H1 (cell line): ENCODE measurements at regions of chr6 and their contacts with region 1.

Region 1: DNA sequence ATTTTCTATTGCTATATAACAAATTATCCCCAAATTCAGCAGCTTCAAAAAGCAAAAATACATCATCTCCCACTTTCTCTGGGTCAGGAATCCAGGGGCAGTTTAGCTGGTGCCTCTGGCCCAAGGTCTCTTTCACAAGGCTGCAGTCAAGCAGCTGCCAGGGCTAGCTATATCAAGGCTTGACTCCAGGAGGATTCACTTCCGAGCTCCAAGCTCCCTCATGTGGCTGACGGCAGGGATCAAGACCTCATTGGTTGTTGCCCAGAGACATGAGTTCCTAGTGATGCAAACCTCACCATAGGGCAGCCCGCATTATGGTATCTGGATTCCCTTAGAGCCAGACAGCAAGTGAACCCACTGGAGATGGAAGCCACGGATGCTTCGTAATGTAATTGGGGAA is 1.3 kb upstream of the VNN1 start:
- DNase-seq: peak; percentile 54 to 58
- H3K4me3 ChIP-seq: no peak overlapping the region
- H3K27ac ChIP-seq: no peak overlapping the region
- H3K4me1 ChIP-seq: no peaks in the 10 kb centered on the region
- H3K27me3 ChIP-seq: no peaks in the 10 kb centered on the region
- CTCF ChIP-seq: peak; percentile 55 to 77 (median 74)
- EP300 ChIP-seq: no peak
- POLR2A ChIP-seq: no peak
- RAD21 ChIP-seq: peak; percentile 90 to 95

Region 2: GRCh38 chr6:132530293-132530974 is 184.8 kb before region 1 on chr6:
- CTCF ChIA-PET with region 1: interaction called, 14 read pairs
- POLR2A ChIA-PET with region 1: no interaction called
- DNase-seq: peak in 1 of 2 experiments; percentile 77
- H3K4me3 ChIP-seq: peak overlapping the region in 1 of 4 experiments; percentile 38; a peak in 1 of 8 replicates
- H3K27ac ChIP-seq: no peak overlapping the region
- H3K4me1 ChIP-seq: peaks cover 0 to 2% (median 0%) of the 10 kb centered on the region in 4 experiments; a peak in 2 of 7 replicates
- H3K27me3 ChIP-seq: no peaks in the 10 kb centered on the region
- CTCF ChIP-seq: peak in 2 of 3 experiments; percentile 64 to 71; a peak in 3 of 4 replicates
- EP300 ChIP-seq: no peak
- POLR2A ChIP-seq: no peak
- RAD21 ChIP-seq: peak; percentile 85

Region 3: DNA sequence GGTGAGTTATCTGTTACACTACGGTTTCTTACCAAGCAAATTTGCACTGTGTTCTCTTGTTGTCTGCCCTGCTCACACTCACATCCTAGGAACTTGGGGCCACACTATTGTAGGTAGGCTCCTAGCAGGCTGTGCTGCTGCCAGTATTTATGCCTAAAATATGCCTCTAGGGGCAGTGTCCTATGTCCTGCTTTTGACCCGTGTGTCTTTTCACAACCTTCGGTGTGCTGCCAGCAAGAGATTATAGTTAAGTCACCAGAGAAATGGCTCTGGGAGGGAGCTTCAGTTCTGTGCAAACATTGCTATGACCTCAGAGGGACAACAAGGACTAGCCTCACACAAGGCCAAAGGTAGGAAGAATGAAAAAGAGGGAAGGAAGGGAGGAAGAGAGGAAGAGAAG is 116.7 kb before region 1 on chr6:
- CTCF ChIA-PET with region 1: interaction called, 13 read pairs
- POLR2A ChIA-PET with region 1: no interaction called
- DNase-seq: no peak
- H3K4me3 ChIP-seq: no peak overlapping the region
- H3K27ac ChIP-seq: no peak overlapping the region
- H3K4me1 ChIP-seq: no peaks in the 10 kb centered on the region
- H3K27me3 ChIP-seq: no peaks in the 10 kb centered on the region
- CTCF ChIP-seq: peak; percentile 21 to 72 (median 49)
- EP300 ChIP-seq: no peak
- POLR2A ChIP-seq: no peak
- RAD21 ChIP-seq: peak; percentile 32 to 35

Region 4: GRCh38 chr6:132703936-132704335 is 11.3 kb before region 1 on chr6:
- CTCF ChIA-PET with region 1: interaction called, 15 read pairs
- POLR2A ChIA-PET with region 1: no interaction called
- DNase-seq: no peak
- H3K4me3 ChIP-seq: no peak overlapping the region
- H3K27ac ChIP-seq: no peak overlapping the region
- H3K4me1 ChIP-seq: no peaks in the 10 kb centered on the region
- H3K27me3 ChIP-seq: no peaks in the 10 kb centered on the region
- CTCF ChIP-seq: no peak
- EP300 ChIP-seq: no peak
- POLR2A ChIP-seq: no peak
- RAD21 ChIP-seq: no peak

Region 5: DNA sequence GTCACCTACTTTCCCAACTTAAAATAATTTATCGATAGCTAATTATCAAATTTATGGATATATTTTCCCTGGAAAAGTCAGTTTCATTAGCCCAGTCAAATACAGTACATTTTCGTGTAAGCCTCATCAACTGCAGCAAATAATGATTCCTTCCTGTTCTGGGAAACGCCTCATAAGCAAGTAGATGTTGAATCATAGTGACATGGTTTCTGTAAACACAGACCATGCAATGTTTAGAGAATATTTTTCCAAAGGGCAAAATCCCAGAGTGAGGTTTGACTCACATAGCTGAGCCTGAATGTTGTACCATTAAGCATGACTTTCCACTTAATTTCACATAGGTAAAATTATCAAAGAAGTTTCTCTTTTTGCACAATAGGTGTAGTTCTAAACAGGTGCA is 15.4 kb after region 1 on chr6:
- CTCF ChIA-PET with region 1: interaction called, 38 read pairs
- POLR2A ChIA-PET with region 1: no interaction called
- DNase-seq: no peak
- H3K4me3 ChIP-seq: no peak overlapping the region
- H3K27ac ChIP-seq: no peak overlapping the region
- H3K4me1 ChIP-seq: no peaks in the 10 kb centered on the region
- H3K27me3 ChIP-seq: no peaks in the 10 kb centered on the region
- CTCF ChIP-seq: no peak
- EP300 ChIP-seq: no peak
- POLR2A ChIP-seq: no peak
- RAD21 ChIP-seq: no peak